ENCODE measurements at regions of chr16 and their contacts with region 1.

Region 1: GRCh38 chr16:17432901-17433576 is 37.7 kb downstream of the XYLT1 start:
- DNase-seq: no peak
- ATAC-seq: peak; percentile 24 to 63 (median 34)
- H3K4me3 ChIP-seq: no peak overlapping the region
- H3K27ac ChIP-seq: peak overlapping the region in 9 of 12 donors; percentile 17 to 75 (median 41)
- H3K4me1 ChIP-seq: peaks cover 0 to 32% (median 0%) of the 10 kb centered on the region in 12 donors
- H3K27me3 ChIP-seq: no peaks in the 10 kb centered on the region
- CTCF ChIP-seq: no peak
- POLR2A ChIP-seq: no peak

Region 2: DNA sequence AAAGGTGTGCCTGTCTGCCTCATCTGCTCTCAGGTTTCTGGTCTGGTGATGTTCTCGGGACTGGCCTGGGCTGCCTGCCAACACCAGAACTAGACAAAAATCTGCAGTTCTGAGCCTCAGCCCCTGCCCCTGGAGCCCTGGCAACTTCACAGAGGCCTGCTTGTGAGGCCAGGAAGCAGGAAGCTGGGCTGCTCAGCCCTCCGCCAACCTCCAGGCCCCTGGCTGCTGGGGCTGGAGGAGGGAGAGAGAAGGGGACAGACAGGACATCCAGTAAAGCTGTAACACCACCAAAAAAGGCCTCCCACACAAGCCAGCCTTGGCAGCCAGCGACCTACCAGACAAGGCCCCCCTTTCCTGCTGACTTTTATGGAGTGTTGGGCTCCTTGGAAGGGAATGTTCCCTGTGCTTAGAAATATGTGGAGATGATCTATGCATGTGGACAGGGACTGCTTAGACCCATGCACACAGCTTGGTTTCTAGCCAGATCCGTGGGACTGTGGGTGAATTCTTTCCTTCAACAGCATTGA is 119.9 kb before region 1 on chr16:
- intact Hi-C with region 1: loop called in 1 of 10 experiments (anchors 10 kb)
- DNase-seq: peak in 4 of 5 donors; percentile 23 to 65 (median 32)
- ATAC-seq: peak in 3 of 4 donors; percentile 66 to 77 (median 68)
- H3K4me3 ChIP-seq: no peak overlapping the region
- H3K27ac ChIP-seq: peak overlapping the region in 8 of 12 donors; percentile 6 to 82 (median 54)
- H3K4me1 ChIP-seq: peaks cover 0 to 19% (median 9%) of the 10 kb centered on the region in 12 donors
- H3K27me3 ChIP-seq: no peaks in the 10 kb centered on the region
- CTCF ChIP-seq: no peak
- POLR2A ChIP-seq: no peak

Region 3: DNA sequence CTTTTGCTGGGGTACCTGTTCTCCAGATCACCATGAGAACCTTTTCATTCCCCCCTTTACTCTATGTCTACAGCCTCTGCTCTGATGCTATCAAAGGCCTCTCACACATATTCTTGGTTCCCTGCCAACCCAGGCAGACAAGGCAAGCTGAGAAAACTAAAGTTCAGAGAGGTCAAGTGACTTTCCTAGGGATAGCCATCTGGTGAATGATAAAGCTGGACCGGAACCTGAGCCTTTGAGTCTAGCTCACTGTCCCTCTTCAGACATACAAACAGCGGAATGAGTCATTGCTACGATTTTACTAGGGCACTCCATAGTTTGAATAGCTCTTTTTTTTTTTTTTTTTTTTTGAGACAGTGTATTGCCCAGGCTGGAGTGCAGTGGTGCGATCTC is 35.5 kb before region 1 on chr16:
- intact Hi-C with region 1: no loop called
- DNase-seq: peak in 2 of 5 donors; percentile 24 to 49
- ATAC-seq: peak; percentile 43 to 83 (median 72)
- H3K4me3 ChIP-seq: no peak overlapping the region
- H3K27ac ChIP-seq: peak overlapping the region in 3 of 12 donors; percentile 27 to 76 (median 32)
- H3K4me1 ChIP-seq: peaks cover 0 to 36% (median 15%) of the 10 kb centered on the region in 12 donors
- H3K27me3 ChIP-seq: no peaks in the 10 kb centered on the region
- CTCF ChIP-seq: no peak
- POLR2A ChIP-seq: no peak

Region 4: GRCh38 chr16:17416461-17417311 is 16.4 kb before region 1 on chr16:
- intact Hi-C with region 1: loop called in 1 of 10 experiments (anchors 2 kb)
- DNase-seq: peak in 4 of 5 donors; percentile 25 to 46 (median 32)
- ATAC-seq: peak; percentile 43 to 80 (median 74)
- H3K4me3 ChIP-seq: peak overlapping the region in 3 of 12 donors; percentile 1 to 30 (median 4)
- H3K27ac ChIP-seq: peak overlapping the region in 3 of 12 donors; percentile 37 to 74 (median 38)
- H3K4me1 ChIP-seq: peaks cover 0 to 24% (median 1%) of the 10 kb centered on the region in 12 donors
- H3K27me3 ChIP-seq: no peaks in the 10 kb centered on the region
- CTCF ChIP-seq: peak in 5 of 12 donors; percentile 13 to 31 (median 21)
- POLR2A ChIP-seq: no peak

Measured in heart left ventricle (tissue), 16 donors.